ENCODE measurements at regions of chr12 and their contacts with region 1.

Region 1: DNA sequence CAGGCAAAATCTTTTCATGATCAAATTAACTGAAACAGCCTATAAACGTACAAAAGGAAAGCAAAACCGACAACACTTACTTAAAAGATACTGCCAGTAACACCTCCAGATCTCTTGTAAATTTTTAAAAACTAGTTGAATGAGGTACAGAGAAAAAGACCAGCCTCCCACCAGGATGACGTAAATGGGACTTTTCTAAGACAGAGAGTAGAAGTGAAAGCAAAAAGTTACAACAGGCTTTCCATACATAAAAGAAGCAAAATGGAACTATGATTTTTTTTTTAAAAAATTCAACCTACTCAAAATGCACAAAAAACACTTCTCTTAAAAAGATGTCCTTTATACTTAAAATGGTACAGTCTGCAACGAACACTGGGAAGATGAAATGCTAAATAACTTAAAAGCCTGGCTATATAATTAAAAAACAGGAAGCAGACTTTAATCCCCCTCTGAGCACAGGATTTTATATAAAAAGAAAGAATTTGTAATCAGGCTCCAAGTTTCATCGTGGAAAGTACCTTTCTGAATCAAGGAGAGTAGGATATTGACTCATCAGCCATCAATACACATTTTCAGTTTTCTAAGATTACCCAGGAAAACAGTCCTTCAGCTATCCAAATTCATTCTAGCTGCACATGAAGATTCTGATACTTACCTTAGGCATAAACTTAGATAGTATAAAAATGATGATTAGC is 14.2 kb upstream of the MYO1A start:
- DNase-seq: peak; percentile 72
- H3K4me3 Mint-ChIP-seq: peak overlapping the region; percentile 67
- H3K27ac Mint-ChIP-seq: peak overlapping the region; percentile 97
- H3K4me1 Mint-ChIP-seq: peaks cover 39% of the 10 kb centered on the region
- H3K27me3 Mint-ChIP-seq: no peaks in the 10 kb centered on the region

Region 2: DNA sequence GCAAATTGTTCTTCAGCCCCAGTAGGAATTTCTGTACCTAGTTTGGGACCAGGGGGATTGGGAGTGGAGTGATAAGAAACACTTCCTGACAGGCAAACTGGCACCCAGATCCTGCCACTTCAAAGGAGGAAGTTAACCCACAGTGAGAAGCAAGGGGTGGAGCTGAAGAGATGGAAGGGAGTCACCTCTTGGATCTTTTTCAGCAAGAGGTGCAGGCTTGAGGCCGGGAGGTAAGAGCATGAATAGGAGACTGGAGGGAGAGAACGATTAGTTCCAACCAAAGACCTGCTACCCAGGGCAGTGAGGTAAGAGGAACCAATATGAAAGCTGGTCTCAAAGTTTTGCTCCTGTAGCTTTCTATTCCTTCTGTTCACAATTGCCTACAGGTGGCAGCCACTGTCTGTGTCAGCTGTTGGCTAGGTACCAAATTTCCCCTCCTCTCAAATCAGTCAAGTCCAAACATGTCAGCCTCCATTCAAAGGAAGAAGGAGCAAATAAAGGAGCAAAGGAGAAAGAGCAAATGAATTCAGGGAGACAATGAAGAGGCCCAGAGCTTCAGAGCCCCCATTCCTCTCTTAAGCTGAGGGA is 32.9 kb before region 1 on chr12:
- CTCF ChIA-PET with region 1: interaction called, 44 read pairs
- DNase-seq: peak; percentile 37
- H3K4me3 Mint-ChIP-seq: no peak overlapping the region
- H3K27ac Mint-ChIP-seq: peak overlapping the region; percentile 47
- H3K4me1 Mint-ChIP-seq: peaks cover 38% of the 10 kb centered on the region
- H3K27me3 Mint-ChIP-seq: peaks cover 4% of the 10 kb centered on the region

Region 3: DNA sequence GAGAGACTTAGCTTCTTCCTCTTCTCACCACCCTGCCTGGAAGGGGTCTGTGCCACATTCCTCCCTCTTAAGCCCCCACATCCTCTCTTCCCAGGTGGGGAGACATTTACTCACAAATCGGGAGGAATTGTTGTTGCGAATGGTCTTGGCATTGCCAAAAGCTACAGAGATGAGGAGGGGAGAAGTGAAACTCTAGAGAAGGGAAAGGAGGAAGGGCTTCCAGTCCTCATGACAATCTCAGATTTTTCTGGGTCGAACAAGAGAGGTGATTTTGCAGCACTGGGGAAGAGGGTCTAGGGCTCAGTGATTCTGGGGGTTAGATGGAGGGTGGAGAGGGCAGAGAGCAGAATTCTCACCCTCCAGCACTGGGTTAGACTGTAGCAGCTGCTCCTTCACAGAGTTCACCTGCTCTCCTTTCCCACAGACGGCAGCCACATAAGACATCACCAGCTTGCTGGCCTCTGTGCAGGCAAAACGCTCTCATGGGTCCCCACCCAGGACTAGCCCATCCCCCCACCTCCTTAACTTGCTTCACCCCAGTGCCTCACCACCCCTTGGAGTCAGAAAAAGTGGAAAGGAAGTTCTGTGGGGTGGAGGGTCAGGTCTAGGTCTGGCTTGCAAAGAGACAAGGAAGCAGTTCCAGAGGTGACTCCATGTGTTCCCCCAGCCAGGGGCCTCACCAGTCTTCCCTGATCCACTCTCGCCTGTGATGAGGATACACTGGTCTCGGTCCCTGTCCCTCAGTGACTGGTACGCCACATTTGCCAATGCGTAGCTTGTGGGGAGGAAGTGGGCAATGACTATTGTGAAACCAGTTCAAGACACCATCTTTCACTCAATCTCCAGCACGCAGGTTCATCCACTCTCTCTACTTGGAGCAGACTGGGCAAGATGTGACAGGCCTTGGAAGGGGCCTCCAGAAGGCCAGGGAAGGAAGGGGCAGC is 16.9 kb before region 1 on chr12:
- CTCF ChIA-PET with region 1: interaction called, 30 read pairs
- DNase-seq: peak; percentile 68
- H3K4me3 Mint-ChIP-seq: no peak overlapping the region
- H3K27ac Mint-ChIP-seq: peak overlapping the region; percentile 85
- H3K4me1 Mint-ChIP-seq: peaks cover 34% of the 10 kb centered on the region
- H3K27me3 Mint-ChIP-seq: peaks cover 20% of the 10 kb centered on the region

Region 4: DNA sequence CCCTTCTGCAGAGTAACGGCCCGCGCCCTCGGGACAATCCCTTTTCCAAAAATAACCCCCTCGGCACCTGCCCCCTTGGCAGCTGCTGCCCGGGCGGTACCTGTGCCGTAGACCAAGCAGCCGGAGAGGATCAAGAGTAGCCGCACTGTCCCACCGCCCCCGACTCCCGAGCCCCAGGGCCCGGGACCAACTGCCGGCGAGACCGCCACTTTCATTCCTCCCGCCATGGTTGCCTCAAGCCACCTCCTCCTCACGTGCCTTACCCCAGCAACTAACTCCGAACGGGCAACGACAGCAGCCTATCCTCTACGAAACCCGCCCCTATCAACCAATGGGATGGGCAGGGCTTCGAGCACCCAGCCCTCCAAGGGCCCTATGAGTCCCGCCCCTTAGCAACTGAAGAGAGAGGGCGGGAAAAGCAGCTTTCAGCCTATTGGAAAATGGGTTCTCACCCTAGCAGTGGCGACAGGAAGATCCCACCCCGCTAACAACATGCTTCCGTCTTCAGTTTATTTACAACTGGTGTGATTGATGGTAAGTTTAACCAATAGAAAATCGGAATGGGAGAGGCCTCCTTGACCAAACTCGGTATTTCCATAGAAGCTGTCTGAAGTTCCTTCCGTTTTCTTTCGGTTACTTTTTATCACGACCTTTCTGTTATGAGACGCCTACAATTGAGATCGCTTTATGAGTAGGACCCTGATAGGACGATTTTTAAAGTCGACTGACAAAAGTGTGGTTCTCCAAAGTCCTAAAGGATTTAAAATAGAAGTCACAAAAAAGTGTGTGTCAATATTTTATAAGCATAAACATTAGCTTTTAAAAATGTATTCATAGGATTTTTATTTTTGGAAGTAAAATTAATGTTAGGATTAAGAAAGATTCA is 14.6 kb after region 1 on chr12 and contains the start of gene NEMP1:
- CTCF ChIA-PET with region 1: interaction called, 14 read pairs
- DNase-seq: peak; percentile 98
- H3K4me3 Mint-ChIP-seq: peak within 1 kb of the TSS; percentile 79
- H3K27ac Mint-ChIP-seq: peak within 1 kb of the TSS; percentile 97
- H3K4me1 Mint-ChIP-seq: peaks cover 36% of the 10 kb centered on the region
- H3K27me3 Mint-ChIP-seq: no peaks in the 10 kb centered on the region

Region 5: DNA sequence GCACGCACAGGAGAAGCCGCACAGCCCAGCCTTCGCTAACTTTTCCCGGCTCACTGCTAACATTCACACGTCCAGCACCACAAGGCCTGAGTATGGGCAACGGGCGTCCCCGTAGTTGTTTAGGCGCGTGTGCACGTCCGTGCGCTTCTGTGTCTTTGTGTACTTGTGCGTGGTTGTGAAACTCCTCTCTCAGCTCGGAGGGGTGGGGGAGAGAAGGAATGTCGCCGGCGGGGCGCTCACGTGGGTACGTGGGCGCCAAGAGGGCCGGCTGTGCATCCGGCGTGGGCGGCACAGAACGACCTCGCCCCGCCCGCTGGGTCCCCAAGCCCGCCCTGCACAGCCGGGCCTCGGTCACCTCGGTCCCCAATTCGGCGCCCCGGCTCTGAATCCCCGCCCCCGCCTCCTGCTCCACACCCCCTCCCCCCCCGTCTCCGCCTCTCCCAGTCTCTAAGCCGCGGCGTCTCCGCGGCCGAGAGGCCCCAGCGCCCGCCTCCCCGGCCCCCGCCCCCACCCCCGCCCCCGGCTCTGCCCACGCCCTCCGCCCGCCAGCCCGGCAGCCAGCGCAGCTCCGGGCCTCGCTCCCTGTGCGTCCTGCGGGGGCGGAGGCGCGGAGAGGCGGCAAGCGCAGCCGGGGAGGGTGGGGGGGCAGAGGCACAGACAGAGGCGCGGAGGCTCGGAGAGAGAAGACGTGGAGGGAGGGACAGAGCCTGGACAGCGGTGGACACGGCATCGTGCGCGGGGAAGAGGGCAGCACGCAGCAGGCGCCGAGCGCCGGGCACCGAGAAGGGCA is 24.5 kb after region 1 on chr12 and contains the start of gene NAB2:
- CTCF ChIA-PET with region 1: interaction called, 76 read pairs
- DNase-seq: peak; percentile 97
- H3K4me3 Mint-ChIP-seq: peak within 1 kb of the TSS; percentile 88
- H3K27ac Mint-ChIP-seq: peak within 1 kb of the TSS; percentile 94
- H3K4me1 Mint-ChIP-seq: peaks cover 67% of the 10 kb centered on the region
- H3K27me3 Mint-ChIP-seq: no peaks in the 10 kb centered on the region